Activated CD8-positive, alpha-beta T cell treated with anti-CD3 and anti-CD28 coated beads for 36 hours (primary cell): ENCODE measurements at regions of chr7 and their contacts with region 1.

Region 1: GRCh38 chr7:135281363-135281949 is 47.8 kb downstream of the STRA8 start:
- DNase-seq: peak; percentile 92
- ATAC-seq: peak; percentile 100
- H3K4me3 Mint-ChIP-seq: no peak overlapping the region
- H3K27ac Mint-ChIP-seq: no peak overlapping the region
- H3K4me1 Mint-ChIP-seq: peaks cover 8% of the 10 kb centered on the region
- H3K27me3 Mint-ChIP-seq: peaks cover 5% of the 10 kb centered on the region
- CTCF ChIP-seq: peak; percentile 95

Region 2: GRCh38 chr7:135217645-135218509 is 63.6 kb before region 1 on chr7:
- CTCF ChIA-PET with region 1: no interaction called
- POLR2A ChIA-PET with region 1: no interaction called
- intact Hi-C with region 1: no loop called
- DNase-seq: no peak
- ATAC-seq: no peak
- H3K4me3 Mint-ChIP-seq: no peak overlapping the region
- H3K27ac Mint-ChIP-seq: no peak overlapping the region
- H3K4me1 Mint-ChIP-seq: no peaks in the 10 kb centered on the region
- H3K27me3 Mint-ChIP-seq: peaks cover 3% of the 10 kb centered on the region
- CTCF ChIP-seq: no peak

Region 3: DNA sequence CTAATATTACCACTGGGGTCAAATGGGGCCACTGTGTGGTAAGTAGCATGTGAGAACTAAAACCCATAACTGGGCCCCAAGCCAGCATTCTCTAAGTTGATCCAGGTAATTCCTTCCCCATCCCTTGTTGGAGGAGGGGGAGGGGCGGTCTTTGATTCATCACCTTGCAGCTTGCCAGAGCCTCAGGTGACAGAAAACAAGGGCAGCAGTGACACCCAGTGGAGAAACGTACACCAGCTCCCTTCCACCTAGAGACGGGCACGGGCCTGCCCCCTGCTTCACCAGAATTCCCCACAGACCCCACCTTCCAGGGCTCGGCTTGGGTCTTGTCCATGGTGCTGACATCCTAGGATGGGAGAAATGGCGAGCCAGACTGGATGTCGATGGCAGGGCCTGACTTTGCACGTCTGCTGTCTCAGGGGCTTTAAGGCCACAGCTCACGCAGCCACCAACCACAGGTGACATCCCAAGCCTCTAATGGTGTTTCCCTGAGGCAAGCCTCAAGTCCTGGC is 54.2 kb after region 1 on chr7:
- CTCF ChIA-PET with region 1: interaction called, 62 read pairs
- POLR2A ChIA-PET with region 1: interaction called, 3 read pairs
- intact Hi-C with region 1: loop called (anchors 5 kb)
- DNase-seq: peak; percentile 69
- ATAC-seq: peak; percentile 63
- H3K4me3 Mint-ChIP-seq: no peak overlapping the region
- H3K27ac Mint-ChIP-seq: no peak overlapping the region
- H3K4me1 Mint-ChIP-seq: peaks cover 3% of the 10 kb centered on the region
- H3K27me3 Mint-ChIP-seq: no peaks in the 10 kb centered on the region
- CTCF ChIP-seq: no peak

Region 4: DNA sequence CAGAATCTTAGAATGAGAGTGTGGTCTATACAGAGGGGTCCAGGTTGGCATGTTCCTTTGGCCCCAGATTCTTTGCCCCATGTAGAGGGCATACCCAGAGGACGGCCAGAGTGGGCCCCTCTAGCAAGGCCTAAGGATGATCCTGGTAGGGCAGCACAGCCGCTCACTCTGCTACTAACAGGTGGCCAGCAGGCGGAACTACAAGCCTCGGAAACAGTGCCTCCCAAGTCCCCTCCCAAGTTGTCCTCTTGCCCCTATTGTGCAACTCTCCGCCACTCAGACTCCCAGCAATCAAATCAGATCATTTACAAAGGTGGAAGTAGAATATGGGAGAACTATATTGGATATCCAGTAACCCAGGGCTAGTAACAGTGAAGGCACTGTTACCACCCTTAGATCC is 59.6 kb after region 1 on chr7:
- CTCF ChIA-PET with region 1: interaction called, 62 read pairs
- POLR2A ChIA-PET with region 1: no interaction called
- intact Hi-C with region 1: loop called (anchors 5 kb)
- DNase-seq: no peak
- ATAC-seq: no peak
- H3K4me3 Mint-ChIP-seq: no peak overlapping the region
- H3K27ac Mint-ChIP-seq: no peak overlapping the region
- H3K4me1 Mint-ChIP-seq: no peaks in the 10 kb centered on the region
- H3K27me3 Mint-ChIP-seq: no peaks in the 10 kb centered on the region
- CTCF ChIP-seq: no peak

Region 5: GRCh38 chr7:135414850-135415439 is 133.5 kb after region 1 on chr7:
- CTCF ChIA-PET with region 1: interaction called, 10 read pairs
- POLR2A ChIA-PET with region 1: no interaction called
- intact Hi-C with region 1: no loop called
- DNase-seq: peak; percentile 73
- ATAC-seq: peak; percentile 39
- H3K4me3 Mint-ChIP-seq: no peak overlapping the region
- H3K27ac Mint-ChIP-seq: no peak overlapping the region
- H3K4me1 Mint-ChIP-seq: peaks cover 2% of the 10 kb centered on the region
- H3K27me3 Mint-ChIP-seq: no peaks in the 10 kb centered on the region
- CTCF ChIP-seq: peak; percentile 63

Region 6: GRCh38 chr7:135490783-135491182 is 209.3 kb after region 1 on chr7:
- CTCF ChIA-PET with region 1: no interaction called
- POLR2A ChIA-PET with region 1: no interaction called
- intact Hi-C with region 1: no loop called
- DNase-seq: no peak
- ATAC-seq: no peak
- H3K4me3 Mint-ChIP-seq: no peak overlapping the region
- H3K27ac Mint-ChIP-seq: no peak overlapping the region
- H3K4me1 Mint-ChIP-seq: peaks cover 16% of the 10 kb centered on the region
- H3K27me3 Mint-ChIP-seq: no peaks in the 10 kb centered on the region
- CTCF ChIP-seq: no peak

Region 7: DNA sequence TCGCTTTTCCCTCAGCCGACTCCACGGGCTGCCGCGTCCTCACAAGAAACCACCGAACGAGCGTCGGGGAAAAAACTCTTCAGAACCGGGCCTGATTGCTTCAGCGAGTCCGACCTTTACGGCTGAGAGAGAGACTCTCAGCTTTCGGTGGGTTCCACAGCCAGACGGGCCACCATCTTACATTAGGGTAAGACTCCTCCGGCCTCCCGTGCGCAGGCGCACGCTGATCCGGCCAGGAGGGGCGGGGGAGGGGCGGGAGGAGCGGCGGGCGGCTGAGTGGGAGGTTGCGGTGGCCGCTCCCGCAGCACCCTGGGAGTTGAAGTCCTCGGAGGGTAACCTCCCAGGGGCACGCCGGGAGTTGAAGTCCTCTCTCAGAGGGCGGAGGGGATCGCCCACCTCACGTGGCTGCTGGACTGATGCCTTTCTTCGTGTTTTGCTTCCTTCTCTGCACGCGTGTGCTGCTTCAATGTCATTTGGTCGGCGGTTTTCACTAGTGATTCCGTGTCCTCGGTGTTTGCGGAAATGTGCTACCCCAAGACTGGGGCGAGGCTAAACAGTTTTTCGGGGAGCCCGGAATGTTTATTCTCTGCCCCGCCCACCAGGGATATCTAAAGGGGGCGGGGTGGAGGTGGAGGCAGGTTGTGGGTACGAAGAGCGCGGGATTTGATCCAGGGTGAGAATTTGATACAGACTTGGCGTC is 228.6 kb after region 1 on chr7 and contains the start of gene CNOT4:
- CTCF ChIA-PET with region 1: interaction called, 4 read pairs
- POLR2A ChIA-PET with region 1: no interaction called
- intact Hi-C with region 1: loop called (anchors 5 kb)
- DNase-seq: peak; percentile 97
- ATAC-seq: peak; percentile 92
- H3K4me3 Mint-ChIP-seq: no peak within 1 kb of the TSS
- H3K27ac Mint-ChIP-seq: no peak within 1 kb of the TSS
- H3K4me1 Mint-ChIP-seq: peaks cover 18% of the 10 kb centered on the region
- H3K27me3 Mint-ChIP-seq: no peaks in the 10 kb centered on the region
- CTCF ChIP-seq: no peak
- total RNA-seq, gene CNOT4: 22.0 to 23.6 TPM

Region 8: GRCh38 chr7:135558337-135558767 is 276.9 kb after region 1 on chr7:
- CTCF ChIA-PET with region 1: interaction called, 14 read pairs
- POLR2A ChIA-PET with region 1: no interaction called
- intact Hi-C with region 1: loop called (anchors 10 kb)
- DNase-seq: peak; percentile 83
- ATAC-seq: peak; percentile 62
- H3K4me3 Mint-ChIP-seq: no peak overlapping the region
- H3K27ac Mint-ChIP-seq: no peak overlapping the region
- H3K4me1 Mint-ChIP-seq: peaks cover 18% of the 10 kb centered on the region
- H3K27me3 Mint-ChIP-seq: no peaks in the 10 kb centered on the region
- CTCF ChIP-seq: peak; percentile 71